SK-N-SH (cell line): ENCODE measurements at regions of chr1 and their contacts with region 1.

Region 1: GRCh38 chr1:99018313-99018712 is 13.7 kb upstream of the PLPPR5 start:
- DNase-seq: peak; percentile 9
- H3K4me3 ChIP-seq: no peak overlapping the region
- H3K27ac ChIP-seq: peak overlapping the region in 1 of 2 experiments; percentile 82; a peak in 2 of 4 replicates
- H3K4me1 ChIP-seq: peaks cover 0 to 17% of the 10 kb centered on the region in 2 experiments; a peak in 2 of 4 replicates
- H3K27me3 ChIP-seq: no peaks in the 10 kb centered on the region
- CTCF ChIP-seq: no peak
- EP300 ChIP-seq: peak in 1 of 2 experiments; percentile 61; a peak in 1 of 4 replicates
- RAD21 ChIP-seq: 0 out of 2 replicates have a peak, but pooled peaks have one; percentile 3

Region 2: GRCh38 chr1:99004254-99004859 is 14.0 kb before region 1 on chr1:
- CTCF ChIA-PET with region 1: interaction called, 18 read pairs
- POLR2A ChIA-PET with region 1: interaction called, 5 read pairs
- DNase-seq: no peak
- H3K4me3 ChIP-seq: peak overlapping the region; percentile 56 to 64
- H3K27ac ChIP-seq: peak overlapping the region in 1 of 2 experiments; percentile 93; a peak in 2 of 4 replicates
- H3K4me1 ChIP-seq: peaks cover 0 to 8% of the 10 kb centered on the region in 2 experiments; a peak in 1 of 4 replicates
- H3K27me3 ChIP-seq: peaks cover 31% of the 10 kb centered on the region
- CTCF ChIP-seq: no peak
- EP300 ChIP-seq: no peak
- RAD21 ChIP-seq: no peak